ENCODE measurements at regions of chr5 and their contacts with region 1.

Region 1: DNA sequence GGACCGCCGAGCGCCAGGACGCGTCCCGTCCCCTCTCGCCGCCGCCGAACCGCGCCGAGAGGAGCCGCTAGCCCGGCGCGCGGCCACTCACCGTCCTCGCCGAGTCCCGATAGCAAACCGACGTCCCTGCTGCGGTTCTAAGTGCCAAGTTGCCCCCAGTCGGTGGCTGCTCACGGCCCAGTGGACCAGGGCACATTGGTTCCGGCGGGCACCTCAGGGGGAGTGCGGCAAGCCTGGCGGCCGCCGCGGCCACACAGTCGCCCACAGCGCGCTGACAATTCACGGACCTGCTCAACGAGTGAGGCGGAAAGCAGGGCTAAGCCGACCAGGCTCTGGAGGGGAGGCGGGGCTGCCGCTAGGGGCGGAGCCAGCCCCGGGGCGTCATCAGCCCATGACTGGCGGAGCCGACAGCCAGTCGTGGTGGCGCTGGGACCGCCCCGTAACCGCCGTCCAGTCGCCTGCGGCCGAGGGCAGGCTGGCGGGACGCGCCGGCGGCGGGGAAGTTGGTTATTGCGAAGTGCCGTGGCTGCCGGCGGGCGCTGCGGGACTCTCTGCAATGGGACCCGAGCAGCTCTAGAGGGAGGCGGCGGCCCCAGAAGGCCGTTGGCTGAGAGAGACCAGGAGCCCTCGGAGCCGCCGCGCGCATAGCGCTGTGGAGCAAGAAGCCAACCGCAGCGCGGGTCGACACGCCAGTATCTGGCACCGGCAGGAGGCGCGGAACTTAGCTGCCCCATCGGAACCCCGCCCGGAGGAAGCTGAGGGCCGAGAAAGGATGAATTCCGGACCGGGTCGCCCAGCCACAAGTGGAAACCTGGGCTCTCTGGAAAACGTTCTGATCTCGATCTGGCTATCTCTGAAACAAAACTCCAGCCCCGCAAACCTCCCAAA is at the start of gene MARCHF3:
- DNase-seq: peak; percentile 98
- H3K4me3 Mint-ChIP-seq: peak within 1 kb of the TSS; percentile 84
- H3K27ac Mint-ChIP-seq: peak within 1 kb of the TSS; percentile 49
- H3K4me1 Mint-ChIP-seq: peaks cover 15% of the 10 kb centered on the region
- H3K27me3 Mint-ChIP-seq: no peaks in the 10 kb centered on the region
- CTCF ChIP-seq: peak; percentile 39
- total RNA-seq, gene MARCHF3: 5.4 and 6.9 TPM in 2 replicates

Region 2: GRCh38 chr5:126965061-126965475 is 65.4 kb before region 1 on chr5:
- CTCF ChIA-PET with region 1: no interaction called
- POLR2A ChIA-PET with region 1: interaction called, 8 read pairs
- intact Hi-C with region 1: loop called (anchors 5 kb)
- DNase-seq: peak; percentile 77
- H3K4me3 Mint-ChIP-seq: no peak overlapping the region
- H3K27ac Mint-ChIP-seq: peak overlapping the region; percentile 36
- H3K4me1 Mint-ChIP-seq: peaks cover 30% of the 10 kb centered on the region
- H3K27me3 Mint-ChIP-seq: no peaks in the 10 kb centered on the region
- CTCF ChIP-seq: no peak

Region 3: GRCh38 chr5:127072861-127073846 is 42.7 kb after region 1 on chr5 and contains the start of gene C5orf63:
- CTCF ChIA-PET with region 1: interaction called, 3 read pairs
- POLR2A ChIA-PET with region 1: interaction called, 15 read pairs
- intact Hi-C with region 1: no loop called
- DNase-seq: peak; percentile 58
- H3K4me3 Mint-ChIP-seq: peak within 1 kb of the TSS; percentile 85
- H3K27ac Mint-ChIP-seq: peak within 1 kb of the TSS; percentile 95
- H3K4me1 Mint-ChIP-seq: peaks cover 19% of the 10 kb centered on the region
- H3K27me3 Mint-ChIP-seq: no peaks in the 10 kb centered on the region
- CTCF ChIP-seq: peak; percentile 13
- total RNA-seq, gene C5orf63: 10.8 and 11.1 TPM in 2 replicates

Region 4: DNA sequence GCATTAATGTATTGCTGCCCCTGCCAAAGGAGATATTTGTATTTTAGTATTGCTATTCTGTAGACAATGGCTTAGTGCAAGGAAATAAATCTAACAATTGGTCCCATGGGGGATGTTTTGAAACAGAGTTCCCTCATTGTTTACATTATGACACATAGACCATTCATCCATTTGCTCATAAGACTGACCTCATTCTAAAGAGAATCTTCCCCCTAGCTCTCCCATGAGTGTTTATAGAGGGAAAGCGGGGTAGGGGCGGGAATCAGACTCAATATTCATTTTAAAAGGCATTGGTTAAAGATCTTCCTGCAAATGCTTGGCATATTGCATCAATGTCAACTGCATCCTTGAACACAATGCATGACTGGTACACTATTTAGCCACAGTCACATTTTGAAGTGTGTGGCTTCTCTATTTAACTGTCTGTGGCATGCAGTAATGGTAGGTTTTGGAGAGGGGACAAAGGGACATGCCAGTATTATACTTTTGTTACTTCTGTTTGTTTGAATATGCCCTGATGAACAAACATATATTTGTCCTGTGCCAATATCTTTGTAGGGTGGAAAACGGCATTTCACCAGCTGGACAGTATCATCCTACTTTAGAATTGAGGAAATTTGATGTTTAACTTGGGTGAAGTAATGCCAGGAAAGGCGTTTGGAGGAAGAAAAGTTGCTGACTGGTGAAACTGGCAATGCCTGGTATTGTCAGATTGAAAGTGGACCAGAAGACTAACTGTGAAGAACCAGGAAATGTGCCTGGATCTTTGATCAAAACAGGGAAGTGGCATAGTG is 176.0 kb after region 1 on chr5:
- CTCF ChIA-PET with region 1: interaction called, 3 read pairs
- POLR2A ChIA-PET with region 1: interaction called, 3 read pairs
- intact Hi-C with region 1: loop called (anchors 5 kb)
- DNase-seq: peak; percentile 95
- H3K4me3 Mint-ChIP-seq: no peak overlapping the region
- H3K27ac Mint-ChIP-seq: no peak overlapping the region
- H3K4me1 Mint-ChIP-seq: peaks cover 25% of the 10 kb centered on the region
- H3K27me3 Mint-ChIP-seq: no peaks in the 10 kb centered on the region
- CTCF ChIP-seq: no peak

Region 5: GRCh38 chr5:127492854-127493738 is 462.6 kb after region 1 on chr5:
- CTCF ChIA-PET with region 1: interaction called, 3 read pairs
- POLR2A ChIA-PET with region 1: no interaction called
- intact Hi-C with region 1: loop called (anchors 2 kb)
- DNase-seq: peak; percentile 75
- H3K4me3 Mint-ChIP-seq: no peak overlapping the region
- H3K27ac Mint-ChIP-seq: no peak overlapping the region
- H3K4me1 Mint-ChIP-seq: no peaks in the 10 kb centered on the region
- H3K27me3 Mint-ChIP-seq: peaks cover 82% of the 10 kb centered on the region
- CTCF ChIP-seq: peak; percentile 95